ENCODE measurements at regions of chr20 and their contacts with region 1.

Region 1: DNA sequence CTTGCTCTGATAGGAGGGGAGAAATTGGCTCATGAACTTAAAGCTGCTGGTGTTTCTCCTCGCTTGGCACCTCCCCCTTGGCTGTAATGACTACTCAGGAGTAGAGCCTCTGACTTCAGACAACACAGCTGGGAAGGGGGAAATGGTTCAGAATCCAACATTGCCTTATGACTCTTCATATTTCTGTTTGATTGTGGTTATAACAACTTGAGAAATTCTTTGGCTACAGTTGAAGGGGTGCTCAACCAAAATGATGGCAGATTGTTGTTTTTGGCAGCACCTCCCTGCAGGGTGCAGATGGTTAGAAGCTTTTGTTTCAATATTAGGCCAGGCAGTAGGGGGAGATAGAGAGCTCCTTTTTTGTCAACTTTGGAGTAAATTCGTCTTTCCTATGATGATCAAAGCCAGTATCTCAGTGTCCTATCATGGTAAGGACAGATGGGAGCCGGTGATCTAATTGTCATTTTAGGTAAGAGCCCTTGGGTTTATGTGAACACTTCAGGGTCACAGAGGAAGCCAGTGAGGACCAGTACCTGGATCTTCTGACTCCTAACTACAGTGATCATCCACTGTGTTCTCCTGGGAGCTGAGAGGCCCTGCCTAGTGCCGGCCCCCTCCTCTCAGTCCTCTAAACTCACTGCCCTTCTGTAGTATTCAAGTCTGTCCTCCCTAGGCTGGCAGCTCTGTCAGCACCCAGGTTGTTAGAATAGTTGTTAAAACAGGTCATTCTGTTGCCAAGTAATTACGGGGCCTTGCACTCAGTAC is 39.9 kb downstream of the RPRD1B start:
- DNase-seq: peak in 6 of 9 donors; percentile 7 to 39 (median 12)
- ATAC-seq: peak; percentile 78
- H3K4me3 ChIP-seq: no peak overlapping the region
- H3K4me3 Mint-ChIP-seq: no peak overlapping the region
- H3K27ac ChIP-seq: no peak overlapping the region
- H3K27ac Mint-ChIP-seq: peak overlapping the region in 6 of 9 donors; percentile 15 to 73 (median 44)
- H3K4me1 ChIP-seq: no peaks in the 10 kb centered on the region
- H3K4me1 Mint-ChIP-seq: peaks cover 9 to 34% (median 18%) of the 10 kb centered on the region in 7 donors
- H3K27me3 ChIP-seq: no peaks in the 10 kb centered on the region
- H3K27me3 Mint-ChIP-seq: no peaks in the 10 kb centered on the region

Region 2: DNA sequence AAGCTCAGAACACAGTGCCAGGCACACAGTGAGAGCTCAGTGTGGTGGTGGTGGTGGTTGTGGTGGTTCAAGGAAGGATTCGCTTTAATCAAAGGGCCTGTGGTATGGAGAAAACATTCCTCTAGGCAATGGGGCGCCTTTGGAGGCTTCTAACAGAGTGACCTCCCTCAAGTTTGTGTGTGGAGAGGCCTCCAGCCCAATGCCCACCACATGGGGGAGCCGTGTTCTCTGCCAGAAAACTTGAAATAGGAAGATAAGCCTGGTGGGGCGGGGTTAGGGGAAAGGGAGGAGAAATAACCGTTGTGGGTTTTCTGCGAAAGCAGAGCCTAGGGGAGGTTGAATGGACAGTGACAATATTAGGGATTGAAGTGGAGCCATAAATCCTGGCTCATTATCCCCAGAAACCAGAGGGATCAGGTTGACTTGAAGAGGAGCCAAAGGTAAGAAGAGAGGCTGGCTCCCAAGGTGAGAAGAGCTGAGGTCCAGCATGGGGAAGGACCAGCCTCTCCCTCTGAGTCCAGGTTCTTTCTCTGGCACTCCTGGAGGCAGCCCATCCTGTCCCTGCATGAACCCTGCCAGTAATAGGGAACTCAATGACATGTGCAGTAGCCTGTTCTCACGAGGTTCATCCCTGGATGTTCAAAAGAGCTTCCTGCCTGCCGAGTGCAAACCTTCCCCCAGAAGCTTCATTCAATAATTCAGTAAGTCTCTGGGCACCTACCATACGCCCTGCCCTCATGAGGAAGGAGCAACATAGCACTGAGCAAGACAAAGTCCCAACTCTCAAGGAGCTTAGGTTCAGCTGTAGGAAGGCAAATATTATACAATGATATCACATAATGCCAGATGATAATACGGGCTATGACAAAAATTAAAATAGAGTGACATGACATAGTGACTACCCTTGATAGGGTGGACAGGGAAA is 40.2 kb after region 1 on chr20:
- CTCF ChIA-PET with region 1: no interaction called
- POLR2A ChIA-PET with region 1: no interaction called
- intact Hi-C with region 1: loop called in 1 of 2 experiments (anchors 1 kb)
- DNase-seq: no peak
- ATAC-seq: peak; percentile 61
- H3K4me3 ChIP-seq: no peak overlapping the region
- H3K4me3 Mint-ChIP-seq: no peak overlapping the region
- H3K27ac ChIP-seq: no peak overlapping the region
- H3K27ac Mint-ChIP-seq: peak overlapping the region in 1 of 9 donors; percentile 21
- H3K4me1 ChIP-seq: no peaks in the 10 kb centered on the region
- H3K4me1 Mint-ChIP-seq: peaks cover 0 to 7% (median 0%) of the 10 kb centered on the region in 7 donors
- H3K27me3 ChIP-seq: no peaks in the 10 kb centered on the region
- H3K27me3 Mint-ChIP-seq: peaks cover 0 to 22% (median 0%) of the 10 kb centered on the region in 5 donors